BJ (cell line): ENCODE measurements at regions of chr22 and their contacts with region 1.

Region 1: DNA sequence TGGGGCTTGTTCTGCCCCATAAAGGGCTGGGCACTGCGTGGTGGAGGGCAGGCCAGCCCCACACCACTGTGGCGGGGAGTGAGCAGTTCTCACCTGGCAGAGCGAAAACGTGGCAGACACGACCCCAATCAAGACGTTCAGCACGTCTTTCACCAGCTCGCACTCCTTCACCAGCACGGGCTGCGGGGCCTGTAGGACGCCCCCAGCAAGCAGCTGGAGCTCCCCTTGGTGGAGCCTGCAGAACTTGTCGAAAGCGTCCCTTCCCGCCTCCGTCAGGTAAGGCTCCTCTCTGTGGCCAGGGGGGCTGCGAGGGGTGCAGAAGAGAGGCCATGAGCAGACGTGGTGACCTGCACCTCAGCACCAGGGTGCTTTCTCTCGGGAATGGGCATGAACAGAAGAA is 11.6 kb downstream of the TUBGCP6 start:
- DNase-seq: no peak
- H3K4me3 ChIP-seq: no peak overlapping the region
- H3K27me3 ChIP-seq: no peaks in the 10 kb centered on the region
- CTCF ChIP-seq: no peak

Region 2: DNA sequence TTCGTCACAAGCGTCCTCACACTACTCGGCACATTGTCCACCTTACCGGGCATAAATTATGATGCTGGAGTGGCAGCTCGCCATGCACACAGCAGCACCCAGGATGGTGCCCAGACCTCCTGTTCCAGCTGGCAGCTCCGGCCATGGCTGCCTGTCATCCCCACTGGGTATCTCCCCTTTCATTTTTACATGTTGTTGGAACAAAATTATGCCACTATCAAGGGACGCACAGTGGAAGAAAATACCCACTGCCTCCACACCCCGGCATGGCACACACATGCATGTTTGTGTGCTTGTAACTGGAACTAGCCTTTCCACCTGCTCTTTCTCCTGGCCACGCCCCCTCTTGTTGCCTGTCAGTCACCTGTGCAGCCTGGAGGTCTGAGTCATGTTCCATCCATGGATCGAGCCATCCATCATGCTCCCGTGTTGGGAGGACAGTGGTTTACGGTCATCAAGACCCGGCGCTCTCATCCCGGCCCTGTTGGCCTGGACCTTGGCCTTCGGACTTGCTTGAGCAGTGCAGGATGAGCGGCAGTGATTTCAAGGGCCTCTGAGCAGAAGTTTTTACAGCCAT is 1475.2 kb before region 1 on chr22:
- CTCF ChIA-PET with region 1: no interaction called
- POLR2A ChIA-PET with region 1: no interaction called
- DNase-seq: no peak
- H3K4me3 ChIP-seq: no peak overlapping the region
- H3K27me3 ChIP-seq: no peaks in the 10 kb centered on the region
- CTCF ChIP-seq: no peak

Region 3: DNA sequence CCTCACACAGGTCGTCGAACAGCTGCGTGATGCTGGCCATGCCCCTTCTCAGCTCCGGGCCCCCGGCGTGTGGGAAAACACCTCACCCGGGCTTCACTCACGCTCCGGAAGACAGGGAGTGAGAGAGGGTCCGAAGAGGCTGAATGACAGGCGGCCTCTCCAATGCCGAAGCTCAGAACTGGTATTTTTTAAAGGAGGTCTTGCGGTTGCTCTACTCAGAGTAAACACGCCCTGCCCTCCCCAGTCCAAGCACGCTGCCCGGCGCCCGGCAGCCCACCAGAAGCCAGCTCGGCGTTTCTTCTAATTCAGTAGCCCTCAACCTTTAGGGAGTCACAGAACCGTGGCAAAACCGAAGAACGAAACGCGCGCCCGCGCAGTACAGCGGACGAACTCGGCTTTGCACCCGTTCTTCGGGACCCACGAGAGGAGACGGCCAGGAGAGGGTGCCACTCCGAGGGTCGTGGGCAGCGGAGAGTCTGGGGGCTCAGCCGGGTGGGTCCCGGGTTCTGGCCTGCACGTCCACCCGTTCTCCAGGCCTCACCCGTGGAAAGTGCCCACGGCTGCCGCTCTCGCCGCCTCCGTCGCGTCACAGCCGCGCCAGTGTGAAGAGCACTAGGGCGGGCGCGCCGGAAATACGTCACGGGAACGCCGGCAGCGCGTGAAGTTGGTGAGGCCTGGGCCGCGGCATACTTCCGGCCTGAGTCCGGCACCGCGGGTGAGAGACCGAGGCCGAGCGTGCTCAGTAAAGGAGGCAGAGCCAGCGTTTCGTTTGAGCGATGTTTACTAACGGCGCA is 11.4 kb after region 1 on chr22 and contains the start of gene TUBGCP6:
- CTCF ChIA-PET with region 1: interaction called, 26 read pairs
- POLR2A ChIA-PET with region 1: no interaction called
- DNase-seq: no peak
- H3K4me3 ChIP-seq: peak within 1 kb of the TSS; percentile 81
- H3K27me3 ChIP-seq: no peaks in the 10 kb centered on the region
- CTCF ChIP-seq: no peak
- polyA plus RNA-seq, gene TUBGCP6: 9.4 and 17.5 TPM in 2 replicates

Region 4: DNA sequence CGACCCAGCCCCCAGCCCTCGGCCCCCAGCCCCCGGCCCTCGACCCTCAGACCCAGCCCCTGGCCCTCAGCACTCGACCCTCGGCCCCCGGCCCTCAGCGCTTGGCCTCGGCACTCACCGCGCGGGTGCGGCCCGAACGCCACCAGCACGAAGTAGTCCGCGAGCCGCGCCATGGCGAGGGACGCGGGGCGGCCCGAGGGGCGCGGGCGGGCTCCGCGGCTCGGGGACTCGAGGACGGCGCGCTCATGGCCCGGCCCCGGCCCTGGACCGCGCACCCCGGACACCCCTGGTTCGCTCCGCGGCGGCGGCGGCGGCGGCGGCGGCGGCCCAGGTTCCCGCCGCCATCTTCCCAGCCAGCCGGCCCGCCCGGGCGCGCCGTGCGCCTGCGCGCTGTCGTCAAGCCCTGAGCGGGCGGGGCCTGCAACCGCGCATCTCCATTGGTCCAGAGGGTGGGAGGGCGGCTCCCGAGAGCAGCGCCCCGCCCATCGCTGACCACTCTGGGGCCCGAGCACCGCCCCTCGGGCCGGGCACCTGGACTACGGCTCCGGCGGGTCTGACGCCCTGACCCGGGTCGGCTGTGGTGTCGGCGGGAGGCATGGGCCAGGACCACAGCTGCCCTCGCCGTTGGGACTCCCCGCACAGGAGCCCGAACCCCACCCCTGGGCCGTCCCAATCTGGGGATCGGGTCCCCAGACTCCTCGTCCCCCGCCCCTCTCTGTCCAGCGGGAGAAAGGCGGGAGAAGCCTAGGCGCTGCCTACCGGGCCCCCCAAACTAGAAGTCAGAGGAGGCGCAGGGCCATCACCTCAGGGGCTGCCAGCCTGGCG is 241.7 kb after region 1 on chr22 and contains the start of gene SBF1:
- CTCF ChIA-PET with region 1: no interaction called
- POLR2A ChIA-PET with region 1: no interaction called
- DNase-seq: peak; percentile 31
- H3K4me3 ChIP-seq: peak within 1 kb of the TSS; percentile 64
- H3K27me3 ChIP-seq: peaks cover 2% of the 10 kb centered on the region; the same call in 1 of the 2 replicates
- CTCF ChIP-seq: no peak
- polyA plus RNA-seq, gene SBF1: 21.7 and 34.7 TPM in 2 replicates